Activated CD4-positive, alpha-beta T cell treated with anti-CD3 and anti-CD28 coated beads for 36 hours (primary cell): ENCODE measurements at regions of chr10 and their contacts with region 1.

Region 1: GRCh38 chr10:14556285-14556956 is 218.3 kb downstream of the FAM107B start:
- DNase-seq: peak; percentile 48
- ATAC-seq: peak; percentile 37
- H3K4me3 Mint-ChIP-seq: peak overlapping the region; percentile 17
- H3K27ac Mint-ChIP-seq: peak overlapping the region; percentile 86
- H3K4me1 Mint-ChIP-seq: peaks cover 93% of the 10 kb centered on the region
- H3K27me3 Mint-ChIP-seq: no peaks in the 10 kb centered on the region

Region 2: DNA sequence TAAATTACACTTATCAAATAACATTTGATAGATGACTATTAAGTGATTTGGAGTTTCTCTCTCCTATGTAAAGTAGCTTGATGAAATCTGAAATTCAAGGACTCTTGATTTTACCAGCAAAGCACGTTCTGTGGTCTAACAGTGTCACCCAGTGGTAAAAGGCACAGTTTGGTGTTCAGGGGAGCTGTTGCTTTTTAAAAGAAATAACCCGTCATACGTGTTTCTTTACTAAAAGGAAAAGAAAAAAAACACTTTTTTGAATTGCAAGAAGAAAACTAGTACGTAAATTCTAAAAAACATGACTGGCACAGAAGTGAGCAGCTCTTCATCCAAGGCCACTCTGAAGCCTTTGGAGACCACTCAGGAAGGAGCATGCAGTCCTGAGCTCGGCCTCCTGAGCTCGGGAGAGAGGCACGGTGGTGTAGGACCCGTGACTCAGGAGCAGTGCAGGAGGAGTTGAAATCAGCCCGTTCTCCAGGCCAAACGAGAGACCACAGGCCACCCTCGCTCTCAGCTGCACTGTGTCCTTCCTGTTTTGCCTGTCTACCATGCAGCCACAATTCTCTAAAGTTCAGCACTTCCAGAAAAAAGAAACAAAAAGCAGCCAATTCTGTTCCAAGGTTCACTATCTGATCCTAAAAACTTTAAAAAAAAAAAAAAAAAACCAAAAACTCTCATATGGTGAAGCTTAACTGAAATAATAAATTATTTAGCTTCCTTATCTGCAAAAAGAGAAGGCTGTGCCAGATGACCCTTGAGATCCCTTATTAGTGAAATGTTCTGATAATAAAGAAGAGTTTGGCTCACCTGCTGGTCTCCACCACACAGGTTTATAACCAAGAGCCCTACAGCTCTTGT is 13.1 kb before region 1 on chr10:
- CTCF ChIA-PET with region 1: interaction called, 22 read pairs
- POLR2A ChIA-PET with region 1: no interaction called
- intact Hi-C with region 1: no loop called
- DNase-seq: peak; percentile 60
- ATAC-seq: peak; percentile 81
- H3K4me3 Mint-ChIP-seq: peak overlapping the region; percentile 62
- H3K27ac Mint-ChIP-seq: peak overlapping the region; percentile 90
- H3K4me1 Mint-ChIP-seq: peaks cover 79% of the 10 kb centered on the region
- H3K27me3 Mint-ChIP-seq: no peaks in the 10 kb centered on the region

Region 3: GRCh38 chr10:14571866-14572507 is 15.6 kb after region 1 on chr10:
- CTCF ChIA-PET with region 1: interaction called, 4 read pairs
- POLR2A ChIA-PET with region 1: interaction called, 11 read pairs
- intact Hi-C with region 1: no loop called
- DNase-seq: peak; percentile 78
- ATAC-seq: peak; percentile 88
- H3K4me3 Mint-ChIP-seq: peak overlapping the region; percentile 66
- H3K27ac Mint-ChIP-seq: peak overlapping the region; percentile 93
- H3K4me1 Mint-ChIP-seq: peaks cover 93% of the 10 kb centered on the region
- H3K27me3 Mint-ChIP-seq: no peaks in the 10 kb centered on the region

Region 4: DNA sequence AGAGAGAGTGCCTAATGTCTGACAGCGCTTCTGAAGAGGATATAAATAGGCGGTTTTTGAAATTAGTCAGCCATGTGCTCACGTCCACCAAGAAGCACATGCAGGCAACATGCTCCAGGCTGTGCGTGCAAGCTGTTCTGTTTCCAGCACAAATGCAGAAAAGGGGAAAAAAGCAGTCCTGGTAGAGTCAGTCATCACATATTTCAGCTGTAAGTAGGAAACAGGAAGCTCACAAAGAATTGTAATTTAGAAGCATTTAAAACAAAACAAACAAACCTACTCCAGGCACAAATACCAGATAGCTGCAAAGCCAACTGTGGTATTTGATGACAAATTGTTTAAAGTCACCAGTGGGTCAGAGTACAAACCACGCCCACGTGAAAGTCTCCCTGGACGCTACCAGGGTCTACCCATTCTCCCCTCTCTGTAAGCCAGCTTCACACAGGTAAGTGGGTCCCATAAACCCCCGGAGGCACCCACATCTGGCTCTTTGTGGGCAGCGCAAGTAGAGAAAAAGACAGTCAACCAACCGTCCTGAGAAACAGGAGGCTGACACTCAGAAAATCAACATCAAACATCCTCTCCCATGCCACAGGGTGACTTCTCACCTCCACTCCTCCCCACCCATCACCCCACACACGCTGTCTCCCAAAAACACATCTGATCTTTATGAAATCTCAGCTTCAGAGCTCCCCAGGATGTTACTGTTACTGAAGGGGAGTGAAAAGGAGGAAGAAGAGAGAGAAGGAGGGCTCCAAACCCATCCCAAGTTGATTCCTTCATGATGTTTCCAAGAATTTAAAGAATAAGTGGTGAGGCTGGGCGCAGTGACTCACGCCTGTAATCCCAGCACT is 31.9 kb after region 1 on chr10:
- CTCF ChIA-PET with region 1: interaction called, 5 read pairs
- POLR2A ChIA-PET with region 1: interaction called, 5 read pairs
- intact Hi-C with region 1: loop called in 1 of 2 experiments (anchors 1 kb)
- DNase-seq: peak; percentile 77
- ATAC-seq: peak; percentile 70
- H3K4me3 Mint-ChIP-seq: peak overlapping the region; percentile 40
- H3K27ac Mint-ChIP-seq: peak overlapping the region; percentile 89
- H3K4me1 Mint-ChIP-seq: peaks cover 93% of the 10 kb centered on the region
- H3K27me3 Mint-ChIP-seq: no peaks in the 10 kb centered on the region

Region 5: DNA sequence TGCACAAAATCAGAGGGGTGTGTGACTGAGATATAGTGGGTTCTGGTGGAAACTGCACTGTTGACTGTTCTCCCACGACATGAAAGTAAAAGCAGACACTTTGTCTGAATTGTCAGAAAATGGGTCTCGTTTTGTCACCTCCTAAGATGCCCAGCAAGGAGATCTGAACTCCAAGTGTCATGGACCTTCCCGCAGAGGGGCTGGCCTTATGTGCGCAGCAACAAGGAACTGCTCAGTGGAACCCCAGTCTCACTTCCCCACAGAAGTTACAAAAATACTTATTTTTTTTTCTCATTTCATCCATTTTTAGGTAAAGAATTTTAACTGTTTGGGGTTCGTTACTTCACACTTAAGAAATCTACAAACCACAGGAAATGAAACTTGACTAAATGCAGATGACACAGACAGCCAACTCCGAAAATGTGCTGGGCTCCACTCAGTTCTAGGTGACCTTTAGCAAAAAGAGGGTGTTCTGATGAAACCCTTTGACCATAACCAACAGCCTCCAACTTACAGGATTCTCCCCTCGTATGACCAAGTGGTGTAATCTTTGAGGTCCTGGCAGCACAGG is 103.3 kb after region 1 on chr10:
- CTCF ChIA-PET with region 1: no interaction called
- POLR2A ChIA-PET with region 1: no interaction called
- intact Hi-C with region 1: loop called in 1 of 2 experiments (anchors 5 kb)
- DNase-seq: peak; percentile 71
- ATAC-seq: peak; percentile 80
- H3K4me3 Mint-ChIP-seq: peak overlapping the region; percentile 60
- H3K27ac Mint-ChIP-seq: peak overlapping the region; percentile 92
- H3K4me1 Mint-ChIP-seq: peaks cover 82% of the 10 kb centered on the region
- H3K27me3 Mint-ChIP-seq: no peaks in the 10 kb centered on the region

Region 6: GRCh38 chr10:15122477-15123030 is 566.1 kb after region 1 on chr10:
- CTCF ChIA-PET with region 1: interaction called, 3 read pairs
- POLR2A ChIA-PET with region 1: no interaction called
- intact Hi-C with region 1: loop called in 1 of 2 experiments (anchors 5 kb)
- DNase-seq: peak; percentile 47
- ATAC-seq: peak; percentile 72
- H3K4me3 Mint-ChIP-seq: peak overlapping the region; percentile 40
- H3K27ac Mint-ChIP-seq: peak overlapping the region; percentile 92
- H3K4me1 Mint-ChIP-seq: peaks cover 36% of the 10 kb centered on the region
- H3K27me3 Mint-ChIP-seq: no peaks in the 10 kb centered on the region